Transverse colon (tissue), 4 donors: ENCODE measurements at regions of chr4 and their contacts with region 1.

Region 1: GRCh38 chr4:187940299-187940698 is 55.3 kb upstream of the ZFP42 start:
- DNase-seq: no peak
- H3K4me3 ChIP-seq: no peak overlapping the region
- H3K27ac ChIP-seq: no peak overlapping the region
- H3K4me1 ChIP-seq: no peaks in the 10 kb centered on the region
- H3K27me3 ChIP-seq: no peaks in the 10 kb centered on the region
- CTCF ChIP-seq: no peak
- EP300 ChIP-seq: no peak
- POLR2A ChIP-seq: no peak

Region 2: GRCh38 chr4:186144142-186144955 is 1796.0 kb before region 1 on chr4:
- in situ Hi-C with region 1: no loop called
- intact Hi-C with region 1: no loop called
- DNase-seq: peak; percentile 55
- H3K4me3 ChIP-seq: peak overlapping the region; percentile 3 to 56 (median 50)
- H3K27ac ChIP-seq: peak overlapping the region; percentile 74 to 82 (median 77)
- H3K4me1 ChIP-seq: peaks cover 0 to 7% (median 5%) of the 10 kb centered on the region in 4 donors
- H3K27me3 ChIP-seq: no peaks in the 10 kb centered on the region
- CTCF ChIP-seq: peak; percentile 15 to 37 (median 26)
- EP300 ChIP-seq: no peak
- POLR2A ChIP-seq: no peak

Region 3: GRCh38 chr4:186221624-186222023 is 1718.7 kb before region 1 on chr4:
- in situ Hi-C with region 1: no loop called
- intact Hi-C with region 1: loop called (anchors 5 kb)
- DNase-seq: no peak
- H3K4me3 ChIP-seq: no peak overlapping the region
- H3K27ac ChIP-seq: no peak overlapping the region
- H3K4me1 ChIP-seq: no peaks in the 10 kb centered on the region
- H3K27me3 ChIP-seq: no peaks in the 10 kb centered on the region
- CTCF ChIP-seq: no peak
- EP300 ChIP-seq: no peak
- POLR2A ChIP-seq: no peak

Region 4: DNA sequence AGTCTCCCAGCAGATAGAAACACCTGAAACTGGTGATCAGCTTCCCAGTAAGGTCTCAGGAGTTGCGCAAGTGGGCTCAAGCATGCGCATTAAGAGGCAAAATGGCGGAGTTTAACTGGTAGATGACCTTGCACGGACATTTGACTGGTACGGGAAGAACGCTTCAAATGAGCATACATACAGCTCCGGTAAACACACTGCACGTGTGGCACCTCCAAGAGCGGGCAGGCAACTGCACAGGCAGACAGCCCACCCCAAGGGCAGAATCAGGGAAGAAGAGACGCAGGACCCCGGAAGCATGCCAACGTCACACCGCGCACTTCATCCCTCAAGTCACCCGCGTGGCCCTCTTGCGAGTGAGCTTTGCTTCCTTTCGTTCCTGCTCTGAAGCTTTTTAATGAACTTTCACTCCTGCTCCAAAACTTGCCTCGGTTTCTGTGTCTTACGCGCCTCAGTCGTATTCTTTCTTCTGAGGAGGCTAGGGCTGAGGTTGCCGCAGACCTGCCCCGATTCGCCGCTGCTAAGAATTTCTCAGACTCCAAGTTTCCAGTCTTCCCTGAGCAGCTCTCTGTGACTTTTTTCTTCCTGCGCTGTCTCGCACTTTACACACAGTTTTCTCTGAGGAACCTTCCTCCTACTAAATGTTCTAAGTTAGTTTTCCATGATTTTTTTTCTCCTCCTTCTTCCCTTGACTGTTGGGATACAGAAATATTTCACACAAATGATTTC is 125.4 kb before region 1 on chr4:
- in situ Hi-C with region 1: no loop called
- intact Hi-C with region 1: no loop called
- DNase-seq: no peak
- H3K4me3 ChIP-seq: peak overlapping the region in 3 of 4 donors; percentile 16 to 36 (median 17)
- H3K27ac ChIP-seq: peak overlapping the region in 3 of 4 donors; percentile 38 to 55 (median 42)
- H3K4me1 ChIP-seq: no peaks in the 10 kb centered on the region
- H3K27me3 ChIP-seq: no peaks in the 10 kb centered on the region
- CTCF ChIP-seq: no peak
- EP300 ChIP-seq: no peak
- POLR2A ChIP-seq: no peak

Region 5: DNA sequence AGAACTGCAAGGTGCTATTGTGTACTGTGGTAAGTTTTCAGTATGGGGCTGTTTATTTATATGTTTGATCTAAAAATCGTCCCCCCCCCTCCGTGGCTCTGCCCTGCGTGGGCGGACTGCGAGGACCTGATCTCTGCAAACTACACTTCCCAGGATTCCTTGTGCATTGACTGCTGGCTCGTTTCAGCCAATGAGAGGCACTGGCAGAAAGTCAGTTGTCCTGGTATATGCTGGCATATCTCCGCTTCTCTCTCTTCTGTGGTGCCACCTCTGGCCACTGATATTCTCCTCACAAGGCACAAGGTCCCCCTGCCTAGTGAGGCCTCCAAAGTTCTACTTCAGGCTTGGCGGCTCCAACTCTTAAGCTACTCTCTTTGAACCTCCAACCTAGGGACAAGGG is 113.6 kb before region 1 on chr4:
- in situ Hi-C with region 1: no loop called
- intact Hi-C with region 1: no loop called
- DNase-seq: no peak
- H3K4me3 ChIP-seq: no peak overlapping the region
- H3K27ac ChIP-seq: no peak overlapping the region
- H3K4me1 ChIP-seq: no peaks in the 10 kb centered on the region
- H3K27me3 ChIP-seq: no peaks in the 10 kb centered on the region
- CTCF ChIP-seq: no peak
- EP300 ChIP-seq: no peak
- POLR2A ChIP-seq: no peak